ENCODE measurements at regions of chr16 and their contacts with region 1.

Region 1: GRCh38 chr16:30740364-30741251 is 7.6 kb upstream of the PHKG2 start:
- DNase-seq: peak; percentile 99
- H3K4me3 Mint-ChIP-seq: peak overlapping the region; percentile 89
- H3K27ac Mint-ChIP-seq: peak overlapping the region; percentile 85
- H3K4me1 Mint-ChIP-seq: peaks cover 36% of the 10 kb centered on the region
- H3K27me3 Mint-ChIP-seq: no peaks in the 10 kb centered on the region
- CTCF ChIP-seq: no peak

Region 2: DNA sequence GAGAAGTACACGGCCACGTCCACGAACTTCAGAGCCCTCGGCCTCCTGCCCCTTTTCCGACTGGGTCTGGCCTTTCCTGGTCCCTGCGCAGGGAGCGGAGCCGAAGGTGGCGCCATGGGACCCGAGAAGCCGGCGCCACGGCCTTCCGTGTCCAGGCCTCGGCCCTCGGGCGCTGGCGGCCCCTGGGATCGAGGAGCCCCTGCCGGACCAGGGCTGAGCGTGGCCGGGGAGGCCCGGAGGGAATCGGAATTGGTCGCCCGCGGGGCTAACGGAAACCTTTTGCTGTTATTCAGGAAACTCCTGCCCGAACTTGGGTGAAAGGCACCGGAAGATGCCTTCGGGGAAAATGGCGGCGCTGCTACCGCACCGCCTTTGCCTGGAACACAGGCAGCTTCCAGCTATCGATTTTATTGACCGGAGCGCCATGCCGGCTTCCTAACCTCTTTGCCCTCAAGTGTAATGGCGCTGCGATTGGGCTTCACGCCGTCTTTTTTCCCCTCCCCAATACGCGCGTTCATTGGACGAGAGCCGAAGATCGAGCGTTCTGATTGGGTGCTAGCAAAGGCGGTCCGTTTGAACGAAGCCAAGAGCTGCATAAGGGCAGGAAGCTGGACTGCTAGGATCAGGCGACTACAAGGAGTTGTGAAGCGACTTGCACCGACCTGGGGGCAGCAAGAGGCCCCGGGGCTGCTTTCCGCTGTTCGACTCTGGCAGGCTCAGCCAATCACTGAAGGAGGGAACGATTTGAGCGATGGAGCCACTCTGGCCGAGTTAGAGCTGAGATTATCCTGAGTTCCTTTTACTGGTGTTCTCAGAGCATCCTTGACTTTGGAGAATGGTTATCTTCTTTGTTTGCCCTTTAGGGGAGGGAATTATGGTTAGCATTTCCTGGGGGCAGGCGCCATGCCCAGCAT is 130.4 kb before region 1 on chr16 and contains the start of gene ZNF689:
- CTCF ChIA-PET with region 1: no interaction called
- POLR2A ChIA-PET with region 1: no interaction called
- intact Hi-C with region 1: no loop called
- DNase-seq: peak; percentile 98
- H3K4me3 Mint-ChIP-seq: peak within 1 kb of the TSS; percentile 80
- H3K27ac Mint-ChIP-seq: peak within 1 kb of the TSS; percentile 92
- H3K4me1 Mint-ChIP-seq: no peaks in the 10 kb centered on the region
- H3K27me3 Mint-ChIP-seq: no peaks in the 10 kb centered on the region
- CTCF ChIP-seq: no peak
- total RNA-seq, gene ZNF689: 4.5 and 6.1 TPM in 2 replicates

Region 3: GRCh38 chr16:30657866-30658730 is 82.5 kb before region 1 on chr16 and contains the start of gene FBRS:
- CTCF ChIA-PET with region 1: no interaction called
- POLR2A ChIA-PET with region 1: interaction called, 18 read pairs
- intact Hi-C with region 1: no loop called
- DNase-seq: peak; percentile 100
- H3K4me3 Mint-ChIP-seq: peak within 1 kb of the TSS; percentile 93
- H3K27ac Mint-ChIP-seq: peak within 1 kb of the TSS; percentile 100
- H3K4me1 Mint-ChIP-seq: peaks cover 21% of the 10 kb centered on the region
- H3K27me3 Mint-ChIP-seq: no peaks in the 10 kb centered on the region
- CTCF ChIP-seq: peak; percentile 57
- total RNA-seq, gene FBRS: 69.1 and 80.8 TPM in 2 replicates

Region 4: GRCh38 chr16:30698139-30698815 is 42.3 kb before region 1 on chr16:
- CTCF ChIA-PET with region 1: interaction called, 4 read pairs
- POLR2A ChIA-PET with region 1: interaction called, 24 read pairs
- intact Hi-C with region 1: loop called (anchors 2 kb)
- DNase-seq: peak; percentile 98
- H3K4me3 Mint-ChIP-seq: peak overlapping the region; percentile 86
- H3K27ac Mint-ChIP-seq: peak overlapping the region; percentile 100
- H3K4me1 Mint-ChIP-seq: peaks cover 14% of the 10 kb centered on the region
- H3K27me3 Mint-ChIP-seq: no peaks in the 10 kb centered on the region
- CTCF ChIP-seq: no peak

Region 5: GRCh38 chr16:30715737-30716445 is 24.7 kb before region 1 on chr16:
- CTCF ChIA-PET with region 1: interaction called, 4 read pairs
- POLR2A ChIA-PET with region 1: interaction called, 12 read pairs
- intact Hi-C with region 1: loop called (anchors 2 kb)
- DNase-seq: peak; percentile 30
- H3K4me3 Mint-ChIP-seq: peak overlapping the region; percentile 19
- H3K27ac Mint-ChIP-seq: peak overlapping the region; percentile 78
- H3K4me1 Mint-ChIP-seq: peaks cover 37% of the 10 kb centered on the region
- H3K27me3 Mint-ChIP-seq: no peaks in the 10 kb centered on the region
- CTCF ChIP-seq: no peak

Region 6: DNA sequence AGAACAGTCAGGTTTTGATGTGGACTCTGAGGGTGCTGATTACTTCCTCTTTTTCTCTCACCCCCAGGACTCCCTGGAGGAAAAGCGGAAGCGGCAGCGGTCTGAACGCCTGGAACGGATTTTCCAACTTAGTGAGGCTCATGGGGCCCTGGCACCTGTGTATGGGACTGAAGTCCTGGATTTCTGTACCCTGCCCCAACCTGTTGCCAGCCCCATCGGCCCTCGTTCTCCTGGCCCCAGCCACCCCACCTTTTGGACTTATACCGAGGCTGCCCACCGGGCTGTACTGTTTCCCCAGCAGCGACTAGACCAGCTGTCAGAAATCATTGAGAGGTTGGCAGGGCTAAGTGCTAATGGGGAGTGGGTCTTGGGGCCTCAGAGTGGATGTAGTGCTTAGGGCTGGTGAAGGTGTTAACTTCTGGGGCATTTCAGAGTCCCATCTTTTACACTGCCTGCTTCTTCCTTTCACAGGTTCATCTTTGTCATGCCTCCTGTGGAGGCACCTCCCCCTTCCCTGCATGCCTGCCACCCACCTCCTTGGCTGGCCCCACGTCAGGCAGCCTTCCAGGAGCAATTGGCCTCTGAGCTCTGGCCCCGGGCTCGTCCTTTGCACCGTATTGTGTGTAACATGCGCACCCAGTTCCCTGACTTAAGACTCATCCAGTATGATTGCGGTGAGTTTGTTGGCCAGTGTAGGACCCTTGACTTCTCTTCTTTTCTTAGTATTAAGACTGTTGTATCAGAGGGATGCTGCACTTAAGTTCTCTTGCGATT is 11.5 kb before region 1 on chr16:
- CTCF ChIA-PET with region 1: interaction called, 3 read pairs
- POLR2A ChIA-PET with region 1: interaction called, 24 read pairs
- intact Hi-C with region 1: no loop called
- DNase-seq: no peak
- H3K4me3 Mint-ChIP-seq: no peak overlapping the region
- H3K27ac Mint-ChIP-seq: no peak overlapping the region
- H3K4me1 Mint-ChIP-seq: no peaks in the 10 kb centered on the region
- H3K27me3 Mint-ChIP-seq: no peaks in the 10 kb centered on the region
- CTCF ChIP-seq: no peak

Region 7: DNA sequence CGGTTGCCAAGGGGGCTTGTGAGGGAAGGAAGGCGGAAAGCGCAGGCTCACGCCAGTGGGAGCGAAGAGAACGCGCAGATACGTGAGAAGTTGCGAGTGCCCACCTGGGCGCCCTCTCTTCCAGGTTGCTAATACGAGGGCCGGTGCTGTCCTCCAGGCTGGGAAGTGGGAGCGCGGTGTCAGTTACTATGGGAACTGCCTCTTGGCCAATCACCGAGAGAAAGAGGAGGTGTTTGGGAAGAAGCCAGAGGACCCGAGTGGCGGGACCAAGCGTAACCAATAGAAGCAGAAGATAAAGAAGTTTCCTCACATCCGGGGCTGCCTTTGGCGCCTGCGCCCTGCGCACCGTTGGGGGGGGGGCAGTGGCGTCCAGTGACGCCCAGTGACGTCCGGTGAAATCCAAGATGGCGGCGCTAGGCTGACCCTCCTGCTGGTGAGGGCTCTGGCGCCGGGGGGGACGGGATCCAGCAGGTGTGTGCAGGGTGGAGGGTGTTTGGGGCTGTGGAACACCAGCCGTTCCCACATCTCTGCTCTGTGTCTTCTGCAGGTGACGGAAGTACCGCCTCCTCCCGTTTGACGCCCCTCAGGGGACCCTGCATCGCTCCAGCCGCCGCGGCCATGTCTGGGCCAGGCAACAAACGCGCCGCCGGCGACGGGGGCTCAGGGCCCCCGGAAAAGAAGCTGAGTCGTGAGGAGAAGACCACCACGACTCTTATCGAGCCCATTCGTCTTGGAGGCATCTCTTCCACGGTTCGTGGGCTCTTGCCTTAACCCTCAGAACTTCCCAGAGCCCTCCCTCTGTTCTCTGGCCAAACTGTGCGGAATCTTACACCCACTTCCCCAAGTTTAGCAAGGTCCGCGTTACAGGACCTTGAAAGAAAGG is 21.6 kb after region 1 on chr16 and contains the starts of genes CFAP119 and RNF40:
- CTCF ChIA-PET with region 1: no interaction called
- POLR2A ChIA-PET with region 1: interaction called, 41 read pairs
- intact Hi-C with region 1: loop called (anchors 1 kb)
- DNase-seq: peak; percentile 98
- H3K4me3 Mint-ChIP-seq: peak within 1 kb of the TSS; percentile 87
- H3K27ac Mint-ChIP-seq: peak within 1 kb of the TSS; percentile 88
- H3K4me1 Mint-ChIP-seq: peaks cover 17% of the 10 kb centered on the region
- H3K27me3 Mint-ChIP-seq: no peaks in the 10 kb centered on the region
- CTCF ChIP-seq: no peak
- total RNA-seq, gene CFAP119: 4.8 and 5.2 TPM in 2 replicates
- total RNA-seq, gene RNF40: 78.0 and 85.0 TPM in 2 replicates

Region 8: GRCh38 chr16:30775392-30776188 is 35.0 kb after region 1 on chr16:
- CTCF ChIA-PET with region 1: no interaction called
- POLR2A ChIA-PET with region 1: interaction called, 11 read pairs
- intact Hi-C with region 1: no loop called
- DNase-seq: peak; percentile 87
- H3K4me3 Mint-ChIP-seq: peak overlapping the region; percentile 85
- H3K27ac Mint-ChIP-seq: peak overlapping the region; percentile 82
- H3K4me1 Mint-ChIP-seq: peaks cover 22% of the 10 kb centered on the region
- H3K27me3 Mint-ChIP-seq: no peaks in the 10 kb centered on the region
- CTCF ChIP-seq: no peak

Measured in MCF 10A (cell line).